Activated T-helper 1 cell treated with anti-CD3 and anti-CD28 coated beads, Interleukin-12 subunit alpha, Interleukin-12 subunit beta, Interleukin-2, Interleukin-4 antibody, amounts not matched to agents 30 ng/mL and 10 ng/mL and 1 ng/mL, durations not matched to agents 14 hours and 24 hours and 36 hours (primary cell): ENCODE measurements at regions of chr2 and their contacts with region 1.

Region 1: DNA sequence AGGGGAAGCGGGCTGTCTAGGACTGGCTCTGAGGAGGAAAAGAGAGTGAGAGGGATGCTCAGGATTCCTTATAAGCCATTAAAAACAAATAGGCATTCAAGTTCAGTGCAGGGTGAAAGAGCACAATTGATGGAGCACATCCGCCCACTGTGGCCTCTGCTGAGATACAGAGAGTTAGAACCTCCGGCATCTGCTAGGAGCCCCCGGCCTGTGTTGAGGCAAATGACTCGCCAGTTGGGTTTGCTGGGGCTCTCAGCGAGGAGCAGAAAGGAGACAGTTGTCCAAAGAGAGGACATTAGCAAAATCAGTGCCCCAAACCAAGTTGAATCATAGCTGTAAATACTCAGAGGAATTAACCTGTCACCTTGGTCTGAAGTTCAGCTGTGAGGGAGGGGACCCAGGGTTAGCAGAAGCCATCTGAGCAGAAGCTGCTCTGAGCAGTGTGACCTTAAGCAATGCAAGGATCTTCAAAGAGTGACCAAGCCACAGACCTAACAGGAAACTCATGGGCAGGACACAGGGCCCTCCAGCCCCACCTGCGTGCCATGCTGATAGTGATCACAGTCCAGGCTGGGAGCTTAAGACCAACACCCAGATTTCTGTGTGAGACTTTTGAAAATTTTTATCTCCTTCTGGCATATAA is 23.3 kb upstream of the IL18RAP start:
- DNase-seq: no peak
- H3K4me3 Mint-ChIP-seq: no peak overlapping the region
- H3K27ac Mint-ChIP-seq: no peak overlapping the region
- H3K4me1 Mint-ChIP-seq: peaks cover 31% of the 10 kb centered on the region
- H3K27me3 Mint-ChIP-seq: no peaks in the 10 kb centered on the region

Region 2: DNA sequence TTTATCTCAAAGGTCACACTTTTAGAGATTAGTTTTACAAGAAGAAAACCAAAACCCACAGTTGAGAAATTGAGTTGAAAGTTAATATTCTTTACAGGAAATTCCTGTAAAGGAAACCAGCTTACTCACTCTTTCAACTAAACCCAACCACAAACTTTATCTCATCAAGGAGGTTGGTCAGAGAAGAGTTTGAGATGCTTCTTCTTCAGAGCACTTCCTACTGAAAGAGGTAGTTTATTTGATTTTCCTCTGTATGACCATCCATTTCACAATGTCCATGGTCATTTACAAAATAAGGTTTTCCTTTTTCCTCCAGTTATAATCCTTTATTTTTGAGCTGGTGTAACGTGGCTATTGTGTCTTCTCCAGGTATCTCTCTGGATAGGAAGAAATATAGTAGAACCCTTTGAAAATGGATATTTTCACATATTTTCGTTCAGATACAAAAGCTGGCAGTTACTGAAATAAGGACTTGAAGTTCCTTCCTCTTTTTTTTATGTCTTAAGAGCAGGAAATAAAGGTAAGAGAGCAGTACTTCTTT is 18.9 kb after region 1 on chr2:
- intact Hi-C with region 1: loop called (anchors 2 kb)
- DNase-seq: peak; percentile 34
- H3K4me3 Mint-ChIP-seq: peak overlapping the region; percentile 90
- H3K27ac Mint-ChIP-seq: peak overlapping the region; percentile 94
- H3K4me1 Mint-ChIP-seq: peaks cover 68% of the 10 kb centered on the region
- H3K27me3 Mint-ChIP-seq: no peaks in the 10 kb centered on the region